Gastrocnemius medialis (tissue), 4 donors: ENCODE measurements at regions of chr18 and their contacts with region 1.

Region 1: GRCh38 chr18:35972197-35973052 is at the start of gene RMP24:
- DNase-seq: peak; percentile 88 to 91
- ATAC-seq: peak; percentile 97 to 98
- H3K4me3 ChIP-seq: peak within 1 kb of the TSS; percentile 79 to 93 (median 88)
- H3K27ac ChIP-seq: peak within 1 kb of the TSS; percentile 85 to 93 (median 92)
- H3K4me1 ChIP-seq: peaks cover 18 to 23% of the 10 kb centered on the region in 2 donors
- H3K27me3 ChIP-seq: no peaks in the 10 kb centered on the region
- CTCF ChIP-seq: no peak
- POLR2A ChIP-seq: peak; percentile 53 to 70

Region 2: DNA sequence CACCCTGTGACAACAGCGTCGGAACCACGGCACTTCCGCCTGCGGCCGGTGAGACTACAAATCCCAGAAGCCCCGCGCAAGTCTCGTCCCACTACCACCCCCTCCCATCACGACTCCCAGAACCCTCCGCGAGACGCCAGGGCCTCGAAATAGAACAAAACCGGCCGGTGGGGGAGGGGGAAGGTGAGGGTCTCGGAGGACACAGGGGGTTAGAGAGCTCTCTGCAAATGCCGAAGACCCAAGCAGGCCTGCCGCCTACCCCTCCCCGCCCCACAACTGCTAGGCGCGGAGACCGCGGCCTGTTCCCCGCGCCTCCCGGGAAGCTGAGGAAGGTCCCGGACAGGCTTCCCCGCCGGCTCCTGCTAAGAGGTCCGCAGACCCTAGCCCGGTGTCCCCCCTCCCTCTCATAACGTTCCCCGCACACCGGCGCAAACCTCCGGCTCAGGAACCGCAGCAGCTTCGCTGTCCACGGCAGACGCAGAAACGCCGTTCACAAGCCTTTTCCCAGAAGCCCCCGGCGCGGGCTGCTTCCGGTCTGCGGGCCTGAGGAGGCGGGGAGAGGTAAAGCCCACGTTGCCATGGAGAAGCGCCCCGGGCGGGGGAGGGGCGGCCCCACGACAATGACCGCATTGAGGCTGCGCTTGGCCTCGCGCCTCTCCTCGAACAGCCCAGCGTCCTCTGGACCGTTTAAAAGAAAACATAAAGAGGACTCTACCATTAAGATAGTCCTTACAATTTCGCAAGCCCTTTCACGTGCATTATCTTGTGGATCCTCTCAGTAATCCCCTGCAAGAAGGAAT is 628.3 kb before region 1 on chr18 and contains the start of gene ZNF24:
- in situ Hi-C with region 1: no loop called
- intact Hi-C with region 1: loop called (anchors 1 kb)
- DNase-seq: peak; percentile 93 to 94
- ATAC-seq: peak; percentile 95
- H3K4me3 ChIP-seq: peak within 1 kb of the TSS; percentile 67 to 100 (median 92)
- H3K27ac ChIP-seq: peak within 1 kb of the TSS; percentile 99 to 100 (median 99)
- H3K4me1 ChIP-seq: peaks cover 48 to 51% of the 10 kb centered on the region in 2 donors
- H3K27me3 ChIP-seq: no peaks in the 10 kb centered on the region
- CTCF ChIP-seq: no peak
- POLR2A ChIP-seq: peak; percentile 79 to 83
- total RNA-seq, gene ZNF24: 30.5 to 50.7 (median 36.3) TPM

Region 3: DNA sequence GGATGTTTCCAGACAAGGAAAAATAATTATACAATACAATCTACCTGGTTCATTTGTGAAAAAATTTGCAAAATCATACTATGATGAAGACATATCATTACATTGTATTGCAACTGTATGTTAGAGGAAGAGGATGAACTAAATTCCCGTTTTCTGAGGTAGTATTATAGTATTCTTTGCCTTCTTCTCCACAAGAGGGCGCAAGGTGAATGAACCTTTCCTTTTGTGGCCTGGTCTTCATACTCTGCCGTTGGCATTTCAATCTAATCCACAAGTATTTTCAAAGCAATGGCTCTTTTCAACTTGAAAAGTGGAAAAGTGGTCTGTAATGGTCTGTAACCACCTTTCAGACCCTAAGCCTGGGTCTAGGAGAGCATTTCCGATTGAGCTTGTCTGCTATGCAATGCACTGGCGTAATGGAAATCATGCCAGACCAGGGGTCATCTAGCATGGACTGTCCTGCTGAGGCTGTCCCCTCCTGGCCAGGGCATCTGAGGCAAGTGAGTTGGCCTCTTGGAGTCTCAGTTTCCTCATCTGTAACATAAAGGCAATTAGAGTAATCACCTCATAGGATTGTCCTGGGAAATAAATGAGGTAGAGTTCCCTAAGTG is 564.4 kb before region 1 on chr18:
- in situ Hi-C with region 1: loop called in 3 of 4 experiments (anchors 25 kb)
- intact Hi-C with region 1: no loop called
- DNase-seq: peak; percentile 12 to 17
- ATAC-seq: peak; percentile 85 to 96
- H3K4me3 ChIP-seq: no peak overlapping the region
- H3K27ac ChIP-seq: no peak overlapping the region
- H3K4me1 ChIP-seq: peaks cover 3% of the 10 kb centered on the region in 2 donors
- H3K27me3 ChIP-seq: no peaks in the 10 kb centered on the region
- CTCF ChIP-seq: peak; percentile 57 to 76 (median 65)
- POLR2A ChIP-seq: no peak

Region 4: DNA sequence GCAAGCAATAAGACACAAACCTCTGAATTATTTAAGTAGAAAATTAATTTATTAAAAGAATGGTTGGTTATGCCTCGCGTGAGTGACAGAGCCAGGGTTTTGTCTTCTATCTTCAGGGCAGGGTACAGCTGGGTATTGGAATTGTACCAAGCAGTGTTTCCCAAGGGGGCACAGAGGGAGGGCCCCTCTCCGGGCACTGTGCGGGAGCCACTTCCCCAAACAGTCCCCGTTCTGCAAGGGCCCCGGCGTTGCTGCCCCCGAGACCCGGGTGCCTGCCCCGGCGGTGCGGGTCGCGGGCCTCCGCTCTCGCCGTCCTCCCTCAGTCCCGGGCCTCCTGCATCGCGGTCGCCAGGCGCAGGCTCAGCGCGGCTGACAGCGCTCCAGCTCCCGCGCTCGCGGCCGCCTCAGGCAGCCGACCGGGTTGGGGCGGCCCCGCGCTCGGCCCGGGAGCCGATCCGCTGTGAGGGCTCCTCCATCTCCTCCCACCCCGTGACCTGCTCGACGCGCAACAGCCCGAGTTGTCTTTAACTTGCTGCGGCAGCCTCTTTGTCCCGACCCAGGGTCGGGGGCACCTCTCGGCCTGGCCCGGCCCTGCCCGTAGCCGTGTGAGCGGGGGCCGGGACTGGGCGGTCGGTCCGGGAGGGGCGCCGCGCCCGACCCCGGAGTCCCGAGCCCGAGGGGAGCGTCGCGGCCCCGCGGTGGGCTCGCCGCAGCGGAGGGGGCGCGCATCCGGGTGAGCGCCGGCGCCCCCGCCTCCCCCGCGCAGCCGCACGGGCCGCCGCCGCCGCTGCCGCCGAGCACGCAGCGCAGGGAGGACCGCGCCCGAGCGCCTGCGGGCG is 391.5 kb before region 1 on chr18:
- in situ Hi-C with region 1: loop called in 1 of 4 experiments (anchors 25 kb)
- intact Hi-C with region 1: loop called (anchors 10 kb)
- DNase-seq: peak; percentile 40 to 61
- ATAC-seq: peak; percentile 80
- H3K4me3 ChIP-seq: peak overlapping the region; percentile 63 to 90 (median 82)
- H3K27ac ChIP-seq: peak overlapping the region; percentile 87 to 97 (median 95)
- H3K4me1 ChIP-seq: peaks cover 19 to 24% of the 10 kb centered on the region in 2 donors
- H3K27me3 ChIP-seq: no peaks in the 10 kb centered on the region
- CTCF ChIP-seq: no peak
- POLR2A ChIP-seq: peak; percentile 32 to 41

Region 5: DNA sequence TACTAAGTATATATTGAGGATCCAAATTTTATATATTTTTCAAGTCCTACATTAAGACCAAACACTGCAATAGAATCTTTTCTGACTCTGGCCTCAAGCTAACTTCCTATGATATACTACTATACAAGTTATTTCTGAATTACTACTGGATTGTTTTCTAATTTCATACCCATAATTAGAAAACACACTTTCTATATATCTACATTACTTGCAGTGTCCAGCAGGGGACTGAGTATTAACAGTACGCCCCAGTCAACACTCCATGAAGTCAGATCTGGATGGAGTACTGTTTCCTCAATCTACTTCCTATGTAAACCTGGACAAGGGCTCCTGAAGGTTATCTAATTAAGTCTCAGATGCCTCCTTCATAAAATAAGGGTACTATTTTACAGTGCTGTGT is 26.5 kb after region 1 on chr18:
- in situ Hi-C with region 1: no loop called
- intact Hi-C with region 1: no loop called
- DNase-seq: no peak
- ATAC-seq: no peak
- H3K4me3 ChIP-seq: no peak overlapping the region
- H3K27ac ChIP-seq: no peak overlapping the region
- H3K4me1 ChIP-seq: no peaks in the 10 kb centered on the region
- H3K27me3 ChIP-seq: no peaks in the 10 kb centered on the region
- CTCF ChIP-seq: peak in 1 of 5 experiments; percentile 23
- POLR2A ChIP-seq: no peak

Region 6: DNA sequence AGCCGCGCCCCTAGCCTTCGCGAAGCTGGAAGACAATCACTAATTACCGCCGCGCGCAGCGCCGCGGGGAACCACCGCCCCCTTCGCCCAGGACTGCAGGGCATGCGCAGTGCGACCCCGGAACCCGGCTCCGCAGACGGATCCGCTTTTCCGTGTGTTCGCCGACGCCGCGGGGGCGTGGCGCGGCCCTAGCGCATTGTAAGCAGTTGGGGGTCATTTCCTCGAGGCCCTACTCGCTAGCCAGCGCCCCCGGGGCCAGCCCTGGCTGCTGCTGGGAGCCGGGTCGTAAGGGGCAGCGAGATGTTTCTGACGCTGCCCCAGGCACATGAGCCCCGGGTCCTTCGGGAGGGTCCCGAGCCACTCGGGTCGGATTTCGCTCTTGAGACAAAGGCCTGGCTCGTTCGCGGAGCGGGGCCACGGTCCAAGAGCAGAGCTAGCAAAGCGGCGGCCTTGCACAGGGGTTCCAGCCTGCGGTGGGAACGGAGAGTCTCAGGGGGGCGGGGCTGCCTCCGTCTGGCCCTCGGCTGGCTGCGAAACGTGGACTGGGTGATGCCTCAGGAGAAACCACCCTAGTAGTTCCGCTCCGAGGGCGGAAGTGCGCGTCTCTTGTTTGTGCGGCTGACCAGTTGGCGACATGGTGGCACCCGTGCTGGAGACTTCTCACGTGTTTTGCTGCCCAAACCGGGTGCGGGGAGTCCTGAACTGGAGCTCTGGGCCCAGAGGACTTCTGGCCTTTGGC is 157.0 kb after region 1 on chr18 and contains the starts of genes ELP2 and SLC39A6:
- in situ Hi-C with region 1: no loop called
- intact Hi-C with region 1: loop called (anchors 1 kb)
- DNase-seq: peak; percentile 96 to 98
- ATAC-seq: peak; percentile 96 to 97
- H3K4me3 ChIP-seq: peak within 1 kb of the TSS; percentile 93 to 100 (median 97)
- H3K27ac ChIP-seq: peak within 1 kb of the TSS; percentile 99 to 100 (median 100)
- H3K4me1 ChIP-seq: peaks cover 23 to 30% of the 10 kb centered on the region in 2 donors
- H3K27me3 ChIP-seq: no peaks in the 10 kb centered on the region
- CTCF ChIP-seq: no peak
- POLR2A ChIP-seq: peak; percentile 68 to 72
- total RNA-seq, gene ELP2: 23.7 to 51.0 (median 42.8) TPM
- total RNA-seq, gene SLC39A6: 16.7 to 24.7 (median 18.3) TPM

Region 7: DNA sequence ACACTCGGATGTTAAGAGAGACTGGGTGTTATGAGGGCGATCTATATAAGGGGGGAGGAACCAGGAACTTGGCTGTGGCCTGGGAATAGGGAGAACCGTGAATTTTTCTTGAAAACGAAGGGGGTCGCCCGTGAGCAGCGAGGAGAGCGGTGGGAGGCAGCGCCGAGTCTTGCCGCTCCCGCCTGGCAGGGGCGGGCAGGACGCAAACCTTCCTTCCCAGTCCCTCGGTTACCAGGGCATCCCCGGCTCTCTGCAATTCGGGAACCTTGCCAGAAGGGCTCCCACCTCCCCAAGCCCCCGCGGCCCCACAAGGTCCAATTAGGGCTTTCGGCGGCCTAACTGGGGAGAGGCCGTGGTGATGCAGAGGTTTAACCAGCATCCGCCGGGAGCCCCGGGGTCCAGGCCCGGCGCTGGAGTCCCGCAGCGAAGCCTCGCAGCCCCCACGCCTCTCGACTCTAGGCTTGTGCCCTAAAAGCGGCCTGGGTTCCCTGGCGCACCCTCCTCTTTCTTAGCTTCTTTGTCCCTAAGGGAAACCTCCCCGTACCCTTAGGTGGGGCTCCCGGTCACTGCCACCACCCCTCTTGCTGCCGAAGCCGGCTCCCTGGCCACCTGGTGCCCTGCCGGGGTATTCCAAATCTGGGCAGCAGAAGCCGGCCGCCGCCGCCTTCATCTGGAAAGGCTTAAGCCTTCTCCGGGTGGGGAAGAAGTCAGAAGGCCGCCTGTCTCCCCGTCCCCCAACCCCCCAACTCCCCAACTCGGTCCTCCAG is 324.4 kb after region 1 on chr18:
- in situ Hi-C with region 1: no loop called
- intact Hi-C with region 1: no loop called
- DNase-seq: no peak
- ATAC-seq: peak; percentile 37 to 38
- H3K4me3 ChIP-seq: peak overlapping the region; percentile 66 to 99 (median 74)
- H3K27ac ChIP-seq: peak overlapping the region; percentile 71 to 87 (median 82)
- H3K4me1 ChIP-seq: peaks cover 9 to 28% of the 10 kb centered on the region in 2 donors
- H3K27me3 ChIP-seq: no peaks in the 10 kb centered on the region
- CTCF ChIP-seq: peak in 1 of 5 experiments; percentile 11
- POLR2A ChIP-seq: no peak